ENCODE measurements at regions of chr6 and their contacts with region 1.

Region 1: GRCh38 chr6:136415351-136416007 is 125.8 kb upstream of the BCLAF1 start:
- DNase-seq: peak; percentile 11
- ATAC-seq: no peak; the same call in 1 of the 2 replicates
- H3K4me3 ChIP-seq: no peak overlapping the region
- H3K27ac ChIP-seq: no peak overlapping the region
- H3K4me1 ChIP-seq: peaks cover 3% of the 10 kb centered on the region; the same call in 1 of the 2 replicates
- H3K27me3 ChIP-seq: no peaks in the 10 kb centered on the region
- CTCF ChIP-seq: no peak
- POLR2A ChIP-seq: no peak
- RAD21 ChIP-seq: no peak

Region 2: GRCh38 chr6:135128268-135128914 is 1287.1 kb before region 1 on chr6:
- CTCF ChIA-PET with region 1: no interaction called
- POLR2A ChIA-PET with region 1: no interaction called
- dilution Hi-C with region 1: no loop called
- in situ Hi-C with region 1: no loop called
- intact Hi-C with region 1: no loop called
- DNase-seq: no peak
- ATAC-seq: no peak
- H3K4me3 ChIP-seq: no peak overlapping the region
- H3K27ac ChIP-seq: no peak overlapping the region
- H3K4me1 ChIP-seq: no peaks in the 10 kb centered on the region
- H3K27me3 ChIP-seq: peaks cover 30% of the 10 kb centered on the region
- CTCF ChIP-seq: no peak
- POLR2A ChIP-seq: no peak
- RAD21 ChIP-seq: no peak

Region 3: DNA sequence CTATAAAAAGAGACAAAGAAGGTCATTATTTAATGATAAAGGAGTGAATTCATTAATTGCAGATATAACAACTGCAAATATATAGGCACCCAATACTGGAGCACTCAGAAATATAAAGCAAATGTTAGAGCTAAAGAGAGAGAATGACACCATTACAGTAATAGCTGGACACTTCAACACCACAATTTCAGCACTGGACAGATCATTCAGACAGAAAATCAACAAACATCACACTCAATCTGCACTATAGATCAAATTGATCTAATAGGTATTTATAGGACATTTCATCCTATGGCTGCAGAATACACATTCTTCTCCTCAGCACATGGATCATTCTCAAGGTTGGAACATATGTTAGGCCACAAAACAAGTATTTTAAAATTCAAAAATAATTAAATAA is 62.1 kb after region 1 on chr6:
- CTCF ChIA-PET with region 1: no interaction called
- POLR2A ChIA-PET with region 1: no interaction called
- dilution Hi-C with region 1: no loop called
- in situ Hi-C with region 1: no loop called
- intact Hi-C with region 1: loop called (anchors 5 kb)
- DNase-seq: no peak
- ATAC-seq: no peak
- H3K4me3 ChIP-seq: no peak overlapping the region
- H3K27ac ChIP-seq: no peak overlapping the region
- H3K4me1 ChIP-seq: no peaks in the 10 kb centered on the region
- H3K27me3 ChIP-seq: no peaks in the 10 kb centered on the region; the same call in 1 of the 2 replicates
- CTCF ChIP-seq: no peak
- POLR2A ChIP-seq: no peak
- RAD21 ChIP-seq: no peak